HEK293 (cell line): ENCODE measurements at regions of chr9 and their contacts with region 1.

Region 1: DNA sequence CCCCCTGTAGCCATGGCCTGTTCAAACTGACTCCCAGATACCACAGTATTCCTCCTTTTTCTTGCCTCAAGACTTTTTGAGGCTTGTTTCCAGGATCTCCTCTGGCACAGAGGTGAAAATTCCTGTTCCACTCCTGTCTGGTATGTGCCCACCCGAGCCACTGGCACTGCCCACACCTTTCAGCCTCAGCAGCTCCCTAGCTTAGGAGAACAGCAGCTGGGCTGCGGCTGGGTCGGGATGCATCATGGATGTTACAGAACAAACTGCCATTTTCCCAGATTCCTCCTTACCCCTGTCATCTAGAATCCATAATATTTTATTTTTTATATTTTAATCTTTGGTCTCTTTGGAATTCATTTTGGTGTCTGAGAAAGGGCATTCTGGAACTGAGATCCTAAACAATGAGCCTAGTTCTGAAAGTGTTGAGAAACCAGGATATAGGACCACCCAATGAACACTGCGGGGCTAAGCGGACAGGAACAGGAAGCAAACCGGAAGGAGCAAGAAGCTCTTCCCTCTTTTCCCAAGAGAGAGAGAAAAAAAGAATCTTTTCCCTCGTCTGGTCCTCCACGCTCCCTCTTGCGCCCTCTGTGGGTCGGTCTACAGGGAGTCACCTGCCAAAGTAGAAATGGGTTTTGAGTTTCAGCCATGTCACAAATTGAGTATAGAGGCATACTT is 12.5 kb downstream of the OR2S2 start:
- H3K4me3 ChIP-seq: peak overlapping the region; percentile 23
- H3K27ac ChIP-seq: no peak overlapping the region
- H3K4me1 ChIP-seq: no peaks in the 10 kb centered on the region
- CTCF ChIP-seq: peak; percentile 41

Region 2: GRCh38 chr9:35903049-35903448 is 42.4 kb before region 1 on chr9:
- CTCF ChIA-PET with region 1: interaction called, 85 read pairs
- POLR2A ChIA-PET with region 1: interaction called, 6 read pairs
- H3K4me3 ChIP-seq: no peak overlapping the region
- H3K27ac ChIP-seq: no peak overlapping the region
- H3K4me1 ChIP-seq: peaks cover 5% of the 10 kb centered on the region
- CTCF ChIP-seq: 0 out of 2 replicates have a peak, but pooled peaks have one; percentile 19

Region 3: GRCh38 chr9:35910613-35911359 is 34.7 kb before region 1 on chr9:
- CTCF ChIA-PET with region 1: interaction called, 85 read pairs
- POLR2A ChIA-PET with region 1: interaction called, 6 read pairs
- H3K4me3 ChIP-seq: no peak overlapping the region
- H3K27ac ChIP-seq: no peak overlapping the region
- H3K4me1 ChIP-seq: peaks cover 10% of the 10 kb centered on the region
- CTCF ChIP-seq: peak; percentile 49; the same call in 1 of the 2 replicates

Region 4: DNA sequence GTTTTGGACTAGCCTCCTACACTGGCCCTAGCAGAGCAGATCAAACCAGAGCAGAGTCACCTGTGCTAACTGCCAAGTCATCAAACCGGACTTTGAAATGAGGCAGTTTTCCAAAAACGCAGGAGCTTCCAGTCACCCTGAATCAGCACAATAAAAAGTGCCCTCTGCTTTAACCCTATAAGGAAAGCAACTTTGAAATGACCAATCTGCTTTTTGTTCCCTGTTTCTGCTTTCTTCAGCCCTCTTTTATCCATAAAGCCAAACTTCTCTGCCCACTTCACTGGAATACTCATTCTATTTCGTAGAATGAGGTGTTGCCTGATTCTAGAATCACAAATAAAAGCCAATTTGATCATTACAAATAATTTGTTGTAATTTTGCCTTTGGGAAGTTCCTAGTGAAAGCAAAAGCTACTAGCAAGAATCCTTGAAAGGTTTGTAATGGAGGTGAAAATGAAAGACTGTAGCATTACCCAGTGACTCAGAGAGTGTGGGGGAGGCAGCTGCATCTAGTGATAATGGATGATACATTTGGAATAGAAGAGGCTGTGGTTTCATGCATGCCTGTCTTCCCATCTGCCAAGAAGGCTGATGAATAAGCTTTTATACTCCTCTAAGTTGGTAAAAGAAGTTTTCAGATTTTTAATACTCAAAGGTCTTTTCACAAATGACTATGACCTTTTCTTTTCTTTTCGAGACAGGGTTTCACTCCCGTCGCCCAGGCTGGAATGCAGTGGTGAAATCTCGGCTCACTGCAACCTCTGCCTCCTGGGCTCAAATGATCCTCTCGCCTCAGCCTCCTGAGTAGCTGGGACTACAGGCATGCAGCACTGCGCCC is 21.3 kb before region 1 on chr9:
- CTCF ChIA-PET with region 1: interaction called, 18 read pairs
- POLR2A ChIA-PET with region 1: no interaction called
- H3K4me3 ChIP-seq: no peak overlapping the region
- H3K27ac ChIP-seq: no peak overlapping the region
- H3K4me1 ChIP-seq: no peaks in the 10 kb centered on the region
- CTCF ChIP-seq: no peak

Region 5: GRCh38 chr9:35960039-35960655 is 14.7 kb after region 1 on chr9:
- CTCF ChIA-PET with region 1: interaction called, 43 read pairs
- POLR2A ChIA-PET with region 1: interaction called, 3 read pairs
- H3K4me3 ChIP-seq: no peak overlapping the region
- H3K27ac ChIP-seq: no peak overlapping the region
- H3K4me1 ChIP-seq: no peaks in the 10 kb centered on the region
- CTCF ChIP-seq: no peak